ENCODE measurements at regions of chr15 and their contacts with region 1.

Region 1: DNA sequence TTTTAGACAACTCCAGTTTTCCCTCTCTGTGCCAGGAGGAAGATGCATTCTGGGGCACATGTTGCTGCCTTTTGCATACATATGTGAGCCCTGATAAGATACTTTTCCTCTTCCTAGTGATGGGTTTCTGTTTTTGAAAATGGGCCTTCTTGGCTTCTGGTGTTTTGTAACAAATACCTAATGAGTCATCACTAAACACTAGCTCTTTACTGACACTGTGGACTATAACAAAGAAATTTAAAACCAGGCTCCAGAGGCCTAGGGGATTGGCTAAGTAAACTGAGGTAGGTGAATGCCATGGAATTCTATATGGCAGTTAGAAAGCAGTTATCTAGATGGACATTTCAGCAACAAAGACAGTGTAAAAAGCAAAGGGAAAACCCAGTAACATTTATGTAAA is 93.4 kb upstream of the NR2E3 start:
- DNase-seq: no peak
- ATAC-seq: no peak
- H3K4me3 ChIP-seq: no peak overlapping the region
- H3K27ac ChIP-seq: peak overlapping the region in 2 of 10 donors; percentile 15 to 57
- H3K4me1 ChIP-seq: peaks cover 0 to 26% (median 10%) of the 10 kb centered on the region in 9 donors
- H3K27me3 ChIP-seq: no peaks in the 10 kb centered on the region
- CTCF ChIP-seq: no peak

Region 2: DNA sequence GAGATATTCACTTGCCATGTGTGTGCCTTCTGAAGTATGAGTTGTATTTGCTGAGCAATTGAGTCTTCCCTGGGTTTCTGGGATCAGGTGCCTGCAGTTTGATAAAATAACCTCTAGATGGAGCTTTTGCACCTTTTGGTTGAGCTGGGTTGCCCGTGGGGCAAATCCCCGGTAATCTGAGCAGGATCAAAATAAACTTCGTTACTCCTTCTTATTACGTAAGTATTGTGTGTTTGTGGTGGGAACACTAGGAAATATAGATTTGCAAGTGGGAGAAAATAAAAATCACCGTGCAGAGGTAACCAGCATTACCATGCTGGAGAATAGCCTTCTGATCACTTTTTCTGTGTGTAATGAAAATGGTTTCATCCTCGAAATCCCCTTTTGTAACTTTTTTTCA is 184.0 kb before region 1 on chr15:
- intact Hi-C with region 1: loop called in 1 of 10 experiments (anchors 10 kb)
- DNase-seq: no peak
- ATAC-seq: peak in 1 of 8 donors; percentile 32
- H3K4me3 ChIP-seq: no peak overlapping the region
- H3K27ac ChIP-seq: no peak overlapping the region
- H3K4me1 ChIP-seq: peaks cover 0 to 17% (median 5%) of the 10 kb centered on the region in 9 donors
- H3K27me3 ChIP-seq: no peaks in the 10 kb centered on the region
- CTCF ChIP-seq: peak in 8 of 9 donors; percentile 29 to 54 (median 49)

Region 3: DNA sequence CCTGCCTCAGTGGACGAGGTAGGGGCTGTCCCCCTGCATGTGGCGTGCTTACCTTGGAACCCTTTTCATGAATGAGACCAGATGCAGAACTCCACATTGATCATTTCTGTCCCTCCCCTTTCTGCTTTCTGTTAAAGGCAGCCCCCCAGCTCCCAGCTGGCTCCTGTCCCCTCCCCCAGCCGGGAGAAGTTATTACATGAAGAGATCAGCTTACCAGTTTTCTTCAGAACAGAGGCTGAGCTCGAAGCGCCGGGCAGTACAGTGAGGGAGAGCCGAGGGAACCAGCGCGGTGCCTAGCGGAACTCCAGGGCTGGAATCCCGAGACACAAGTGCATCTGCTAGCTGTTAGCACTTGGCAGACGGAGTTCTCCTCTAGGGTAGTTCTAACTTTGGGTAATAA is 170.0 kb before region 1 on chr15:
- intact Hi-C with region 1: no loop called
- DNase-seq: peak; percentile 29 to 42
- ATAC-seq: peak in 7 of 8 donors; percentile 64 to 78 (median 70)
- H3K4me3 ChIP-seq: peak overlapping the region in 4 of 10 donors; percentile 9 to 27 (median 15)
- H3K27ac ChIP-seq: peak overlapping the region in 7 of 10 donors; percentile 3 to 67 (median 35)
- H3K4me1 ChIP-seq: peaks cover 0 to 41% (median 23%) of the 10 kb centered on the region in 9 donors
- H3K27me3 ChIP-seq: no peaks in the 10 kb centered on the region
- CTCF ChIP-seq: no peak

Region 4: GRCh38 chr15:71651750-71652186 is 65.2 kb before region 1 on chr15:
- intact Hi-C with region 1: loop called in 2 of 10 experiments (anchors 5 kb)
- DNase-seq: no peak
- ATAC-seq: peak in 5 of 8 donors; percentile 31 to 43 (median 35)
- H3K4me3 ChIP-seq: no peak overlapping the region
- H3K27ac ChIP-seq: peak overlapping the region in 2 of 10 donors; percentile 15 to 27
- H3K4me1 ChIP-seq: peaks cover 5 to 57% (median 26%) of the 10 kb centered on the region in 9 donors
- H3K27me3 ChIP-seq: no peaks in the 10 kb centered on the region
- CTCF ChIP-seq: peak in 8 of 9 donors; percentile 18 to 59 (median 40)

Region 5: DNA sequence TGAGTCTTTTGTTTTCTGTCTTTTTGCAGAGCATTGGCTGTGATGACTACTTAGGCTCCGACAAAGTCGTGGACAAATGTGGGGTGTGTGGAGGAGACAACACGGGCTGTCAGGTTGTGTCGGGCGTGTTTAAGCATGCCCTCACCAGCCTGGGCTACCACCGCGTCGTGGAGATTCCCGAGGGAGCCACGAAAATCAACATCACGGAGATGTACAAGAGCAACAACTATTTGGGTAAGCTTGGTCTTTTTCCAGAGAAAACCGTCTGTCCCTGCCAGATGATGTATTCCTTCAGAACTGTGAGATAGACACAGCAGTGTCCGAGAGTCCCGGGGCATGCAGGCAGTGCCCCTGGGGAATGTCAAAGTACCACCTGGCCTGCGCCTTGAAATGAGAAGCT is 56.5 kb before region 1 on chr15:
- intact Hi-C with region 1: loop called in 2 of 10 experiments (anchors 5 kb)
- DNase-seq: no peak
- ATAC-seq: no peak
- H3K4me3 ChIP-seq: no peak overlapping the region
- H3K27ac ChIP-seq: peak overlapping the region in 3 of 10 donors; percentile 6 to 76 (median 6)
- H3K4me1 ChIP-seq: peaks cover 0 to 51% (median 10%) of the 10 kb centered on the region in 9 donors
- H3K27me3 ChIP-seq: no peaks in the 10 kb centered on the region
- CTCF ChIP-seq: no peak

Region 6: GRCh38 chr15:71674354-71674753 is 42.6 kb before region 1 on chr15:
- intact Hi-C with region 1: no loop called
- DNase-seq: no peak
- ATAC-seq: no peak
- H3K4me3 ChIP-seq: no peak overlapping the region
- H3K27ac ChIP-seq: no peak overlapping the region
- H3K4me1 ChIP-seq: peaks cover 7 to 52% (median 30%) of the 10 kb centered on the region in 9 donors
- H3K27me3 ChIP-seq: no peaks in the 10 kb centered on the region
- CTCF ChIP-seq: no peak

Region 7: GRCh38 chr15:72078887-72079286 is 361.9 kb after region 1 on chr15:
- intact Hi-C with region 1: no loop called
- DNase-seq: no peak
- ATAC-seq: no peak
- H3K4me3 ChIP-seq: no peak overlapping the region
- H3K27ac ChIP-seq: no peak overlapping the region
- H3K4me1 ChIP-seq: peaks cover 0 to 23% (median 0%) of the 10 kb centered on the region in 9 donors
- H3K27me3 ChIP-seq: no peaks in the 10 kb centered on the region
- CTCF ChIP-seq: no peak

Measured in heart right ventricle (tissue), 16 donors.